ENCODE measurements at regions of chr4 and their contacts with region 1.

Region 1: DNA sequence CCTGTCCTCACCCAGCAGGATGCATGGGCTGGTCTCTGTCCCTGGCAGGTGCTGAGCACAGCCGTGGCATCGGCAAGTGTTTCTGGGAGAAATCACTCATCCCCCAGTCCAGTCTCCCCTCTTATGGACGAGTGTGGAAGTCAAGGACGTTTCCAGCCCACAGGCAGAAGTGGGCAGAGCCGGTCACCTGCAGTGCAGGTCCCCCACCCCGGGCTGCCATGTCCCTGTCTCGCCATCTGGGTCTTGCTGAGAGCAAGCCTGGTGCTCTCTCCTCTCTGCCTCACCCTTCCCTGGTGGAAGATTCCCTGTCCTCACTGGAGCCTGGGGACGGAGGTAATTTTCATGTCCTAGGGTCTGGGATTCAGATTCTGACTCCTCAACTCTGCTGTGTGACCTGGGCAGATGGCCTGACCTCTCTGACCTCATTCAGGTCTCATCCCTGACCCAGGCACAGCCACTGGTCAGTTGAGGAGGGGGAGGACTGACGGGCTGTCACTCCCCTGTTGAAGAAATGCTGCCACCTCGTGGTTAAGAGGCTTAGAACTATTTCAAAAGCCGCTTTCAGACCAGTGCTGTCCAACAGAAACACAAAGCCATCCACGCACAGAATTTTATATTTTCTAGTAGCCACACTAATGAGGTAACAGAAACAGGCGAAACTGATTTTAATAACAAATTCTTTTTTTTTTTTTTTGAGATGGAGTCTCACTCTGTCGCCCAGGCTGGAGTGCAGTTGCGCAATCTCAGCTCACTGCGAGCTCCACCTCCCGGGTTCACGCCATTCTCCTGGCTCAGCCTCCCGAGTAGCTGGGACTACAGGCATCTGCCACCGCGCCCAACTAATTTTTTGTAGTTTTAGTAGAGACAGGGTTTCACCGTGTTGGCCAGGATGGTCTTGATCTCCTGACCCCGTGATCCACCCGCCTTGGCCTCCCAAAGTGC is 1.8 kb downstream of the CPZ start:
- DNase-seq: no peak
- H3K4me3 ChIP-seq: no peak overlapping the region
- H3K27ac ChIP-seq: no peak overlapping the region
- H3K4me1 ChIP-seq: peaks cover 5 to 22% (median 21%) of the 10 kb centered on the region in 4 donors
- H3K27me3 ChIP-seq: peaks cover 0 to 53% (median 15%) of the 10 kb centered on the region in 4 donors
- CTCF ChIP-seq: peak; percentile 60 to 67 (median 60)
- EP300 ChIP-seq: no peak
- POLR2A ChIP-seq: no peak

Region 2: GRCh38 chr4:8241895-8242696 is 352.3 kb before region 1 on chr4:
- intact Hi-C with region 1: loop called (anchors 5 kb)
- DNase-seq: peak; percentile 96
- H3K4me3 ChIP-seq: no peak overlapping the region
- H3K27ac ChIP-seq: peak overlapping the region; percentile 5 to 67 (median 46)
- H3K4me1 ChIP-seq: peaks cover 12 to 19% (median 13%) of the 10 kb centered on the region in 4 donors
- H3K27me3 ChIP-seq: no peaks in the 10 kb centered on the region
- CTCF ChIP-seq: peak; percentile 92 to 98 (median 98)
- EP300 ChIP-seq: peak; percentile 28
- POLR2A ChIP-seq: no peak

Region 3: GRCh38 chr4:8468746-8469535 is 125.4 kb before region 1 on chr4:
- intact Hi-C with region 1: loop called (anchors 5 kb)
- DNase-seq: no peak
- H3K4me3 ChIP-seq: no peak overlapping the region
- H3K27ac ChIP-seq: no peak overlapping the region
- H3K4me1 ChIP-seq: peaks cover 9 to 25% (median 22%) of the 10 kb centered on the region in 4 donors
- H3K27me3 ChIP-seq: no peaks in the 10 kb centered on the region
- CTCF ChIP-seq: peak; percentile 76 to 94 (median 87)
- EP300 ChIP-seq: no peak
- POLR2A ChIP-seq: no peak

Region 4: DNA sequence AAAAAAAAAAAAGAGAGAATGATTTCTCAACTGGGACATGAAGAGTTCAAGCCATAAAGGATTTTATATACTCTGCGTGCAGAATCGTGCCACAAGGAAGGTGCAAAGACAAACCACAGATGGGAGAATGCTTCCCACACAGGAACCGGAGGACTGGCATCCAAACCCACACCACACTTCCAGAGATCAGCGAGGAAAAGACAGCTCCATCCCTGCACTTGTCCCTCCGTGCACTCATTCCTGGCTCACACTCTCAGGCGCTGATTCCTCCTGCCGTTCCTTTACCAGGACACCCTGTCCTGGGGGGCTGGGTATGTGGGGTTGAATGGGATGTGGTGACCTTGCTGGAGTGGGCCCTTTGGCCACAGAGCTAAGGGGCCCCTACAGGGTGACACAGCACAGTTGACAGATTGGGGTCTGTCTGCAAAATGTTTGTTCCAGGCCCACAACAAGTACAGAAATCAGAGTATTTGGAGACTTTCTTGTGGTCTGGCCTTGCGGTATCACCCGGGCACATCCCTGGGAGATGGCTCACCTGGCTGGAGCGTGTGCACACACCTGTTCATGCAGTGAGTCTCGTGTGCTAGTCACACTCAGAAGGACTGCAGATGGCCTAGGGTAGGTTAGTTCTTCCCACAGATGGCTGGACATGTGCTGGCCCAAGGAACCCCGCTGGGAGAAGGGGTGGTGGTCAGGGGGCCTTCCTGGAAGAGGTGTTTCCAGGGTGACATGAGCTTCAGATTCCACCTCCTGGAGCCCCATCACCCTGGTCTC is 69.6 kb before region 1 on chr4:
- intact Hi-C with region 1: no loop called
- DNase-seq: no peak
- H3K4me3 ChIP-seq: no peak overlapping the region
- H3K27ac ChIP-seq: no peak overlapping the region
- H3K4me1 ChIP-seq: no peaks in the 10 kb centered on the region
- H3K27me3 ChIP-seq: no peaks in the 10 kb centered on the region
- CTCF ChIP-seq: no peak
- EP300 ChIP-seq: no peak
- POLR2A ChIP-seq: no peak

Region 5: GRCh38 chr4:8537041-8537552 is 57.3 kb before region 1 on chr4:
- intact Hi-C with region 1: loop called (anchors 10 kb)
- DNase-seq: no peak
- H3K4me3 ChIP-seq: peak overlapping the region in 2 of 4 donors; percentile 8 to 24
- H3K27ac ChIP-seq: peak overlapping the region in 1 of 4 donors; percentile 7
- H3K4me1 ChIP-seq: peaks cover 0 to 20% (median 18%) of the 10 kb centered on the region in 4 donors
- H3K27me3 ChIP-seq: no peaks in the 10 kb centered on the region
- CTCF ChIP-seq: no peak
- EP300 ChIP-seq: no peak
- POLR2A ChIP-seq: no peak

Region 6: DNA sequence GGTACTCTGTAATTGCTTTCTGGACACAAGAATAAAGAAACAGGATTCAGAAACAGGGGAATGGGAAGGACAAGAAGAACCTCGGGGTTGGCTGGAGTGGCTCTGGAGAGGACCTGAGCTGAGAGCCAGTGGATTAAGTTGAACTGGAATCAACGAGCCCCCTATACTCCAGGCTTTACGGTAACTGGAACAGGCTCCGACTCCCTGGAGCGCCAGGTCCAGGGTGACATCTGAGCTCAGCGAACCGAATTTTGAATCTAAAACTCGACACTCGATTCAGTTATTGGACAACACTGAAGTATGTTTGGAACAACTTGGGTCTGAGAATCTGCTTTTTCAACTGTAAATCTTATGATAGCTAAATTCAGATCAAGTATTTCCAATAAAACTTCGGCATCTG is 253.4 kb after region 1 on chr4:
- intact Hi-C with region 1: no loop called
- DNase-seq: no peak
- H3K4me3 ChIP-seq: no peak overlapping the region
- H3K27ac ChIP-seq: no peak overlapping the region
- H3K4me1 ChIP-seq: peaks cover 0 to 6% (median 0%) of the 10 kb centered on the region in 4 donors
- H3K27me3 ChIP-seq: peaks cover 0 to 89% (median 5%) of the 10 kb centered on the region in 4 donors
- CTCF ChIP-seq: no peak
- EP300 ChIP-seq: no peak
- POLR2A ChIP-seq: no peak

Measured in esophagus muscularis mucosa (tissue), 4 donors.